ENCODE measurements at regions of chr19 and their contacts with region 1.

Region 1: DNA sequence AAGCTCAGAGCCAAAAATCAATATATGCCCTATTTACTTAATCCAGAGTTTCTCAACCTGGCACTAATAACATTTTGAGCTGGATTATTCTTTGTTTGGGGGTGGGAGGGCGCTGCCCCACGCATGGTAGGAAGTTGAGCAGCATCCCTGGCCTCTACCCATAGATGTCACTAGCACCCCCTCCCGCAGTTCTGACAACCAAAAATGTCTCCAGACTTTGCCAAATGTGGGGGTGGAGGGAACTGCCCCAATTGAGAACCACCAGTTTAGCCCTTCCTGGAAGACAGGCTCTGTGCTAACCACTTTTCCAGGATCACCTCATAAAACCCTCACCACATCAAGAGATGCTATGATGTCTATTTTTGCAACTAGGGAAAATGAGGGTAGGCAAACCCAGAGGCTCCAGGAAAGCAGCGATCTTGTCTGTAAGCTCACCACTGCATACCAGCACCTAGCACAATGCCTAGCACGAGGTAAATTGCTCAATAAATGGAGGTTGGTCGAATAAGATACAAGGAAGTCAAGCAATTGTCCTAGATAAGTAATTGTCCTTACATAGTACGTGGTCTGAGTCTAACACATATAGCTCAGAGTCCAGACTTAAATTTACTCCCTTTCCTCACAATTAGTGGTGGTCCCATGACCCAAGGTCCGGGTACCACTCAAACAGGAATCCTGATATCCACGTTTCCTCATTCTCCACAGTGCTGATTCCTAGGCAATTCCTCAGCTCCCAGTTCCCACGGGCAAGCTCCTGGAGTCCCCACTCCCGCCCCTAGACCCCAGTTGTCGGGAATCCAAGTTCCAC is 911 bp downstream of the TRIR start:
- DNase-seq: no peak

Region 2: GRCh38 chr19:12639901-12640613 is 93.5 kb before region 1 on chr19:
- intact Hi-C with region 1: no loop called
- DNase-seq: peak; percentile 55 to 96 (median 77)

Region 3: GRCh38 chr19:12722566-12723380 is 10.8 kb before region 1 on chr19:
- intact Hi-C with region 1: loop called (anchors 1 kb)
- DNase-seq: peak; percentile 94 to 99 (median 97)

Region 4: DNA sequence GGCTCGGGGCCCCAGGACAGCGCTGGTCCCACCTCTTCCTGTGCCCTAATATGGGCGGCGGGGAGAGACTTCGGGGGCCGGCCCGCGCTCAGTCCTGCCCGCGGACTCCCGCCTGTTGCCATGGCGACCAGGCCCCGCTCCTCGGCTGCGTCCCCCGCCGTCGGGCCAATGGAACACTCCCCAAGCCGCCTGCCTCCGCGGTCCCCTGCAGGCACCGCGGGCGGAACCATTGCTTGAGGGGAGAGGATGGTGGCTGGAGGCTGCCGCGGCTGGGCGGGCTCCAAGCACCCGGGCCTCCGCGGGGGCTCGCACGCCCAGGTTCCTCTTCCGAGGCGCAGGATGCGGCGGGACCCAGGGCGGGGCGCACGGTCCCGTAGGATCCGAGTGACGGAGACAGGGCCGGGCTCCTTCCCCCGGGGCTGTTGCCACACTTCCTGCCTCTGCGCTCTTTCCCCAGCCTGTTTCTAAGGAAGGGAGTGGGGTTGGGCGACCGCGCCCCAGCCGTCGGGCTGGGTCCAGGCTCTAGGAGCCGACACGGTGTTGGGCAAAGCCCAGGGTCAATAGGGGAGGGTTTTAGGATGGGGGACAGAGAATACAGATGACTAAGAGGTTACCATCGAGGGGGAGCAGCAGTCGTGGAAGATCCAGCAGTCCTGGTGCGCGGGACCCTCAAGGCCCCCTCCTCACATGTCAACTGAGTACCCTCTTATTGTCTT is 56.5 kb after region 1 on chr19:
- intact Hi-C with region 1: loop called (anchors 2 kb)
- DNase-seq: peak; percentile 92 to 100 (median 97)